WTC11 (cell line): ENCODE measurements at regions of chr9 and their contacts with region 1.

Region 1: GRCh38 chr9:98056269-98057137 is at the start of gene NANS:
- DNase-seq: peak; percentile 91
- ATAC-seq: peak; percentile 94
- H3K4me3 Mint-ChIP-seq: peak within 1 kb of the TSS; percentile 89
- H3K27ac Mint-ChIP-seq: peak within 1 kb of the TSS; percentile 57; the same call in 1 of the 2 replicates
- H3K4me1 Mint-ChIP-seq: no peaks in the 10 kb centered on the region
- H3K27me3 Mint-ChIP-seq: peaks cover 25% of the 10 kb centered on the region
- CTCF ChIP-seq: no peak
- total RNA-seq, gene NANS: 57.9 to 66.7 TPM (median 61.3 TPM) in 3 replicates

Region 2: GRCh38 chr9:98074115-98074990 is 17.9 kb after region 1 on chr9:
- CTCF ChIA-PET with region 1: interaction called, 19 read pairs
- POLR2A ChIA-PET with region 1: no interaction called
- DNase-seq: peak; percentile 83
- ATAC-seq: peak; percentile 73
- H3K4me3 Mint-ChIP-seq: no peak overlapping the region
- H3K27ac Mint-ChIP-seq: peak overlapping the region; percentile 57
- H3K4me1 Mint-ChIP-seq: peaks cover 32% of the 10 kb centered on the region
- H3K27me3 Mint-ChIP-seq: no peaks in the 10 kb centered on the region
- CTCF ChIP-seq: peak; percentile 96